ENCODE measurements at regions of chr9 and their contacts with region 1.

Region 1: GRCh38 chr9:102499468-102499867 is 495.7 kb upstream of the CYLC2 start:
- DNase-seq: no peak
- ATAC-seq: no peak
- H3K4me3 ChIP-seq: no peak overlapping the region
- H3K4me3 Mint-ChIP-seq: no peak overlapping the region
- H3K27ac ChIP-seq: no peak overlapping the region
- H3K27ac Mint-ChIP-seq: no peak overlapping the region
- H3K4me1 ChIP-seq: no peaks in the 10 kb centered on the region
- H3K4me1 Mint-ChIP-seq: no peaks in the 10 kb centered on the region
- H3K27me3 ChIP-seq: no peaks in the 10 kb centered on the region
- H3K27me3 Mint-ChIP-seq: no peaks in the 10 kb centered on the region
- CTCF ChIP-seq: no peak

Region 2: DNA sequence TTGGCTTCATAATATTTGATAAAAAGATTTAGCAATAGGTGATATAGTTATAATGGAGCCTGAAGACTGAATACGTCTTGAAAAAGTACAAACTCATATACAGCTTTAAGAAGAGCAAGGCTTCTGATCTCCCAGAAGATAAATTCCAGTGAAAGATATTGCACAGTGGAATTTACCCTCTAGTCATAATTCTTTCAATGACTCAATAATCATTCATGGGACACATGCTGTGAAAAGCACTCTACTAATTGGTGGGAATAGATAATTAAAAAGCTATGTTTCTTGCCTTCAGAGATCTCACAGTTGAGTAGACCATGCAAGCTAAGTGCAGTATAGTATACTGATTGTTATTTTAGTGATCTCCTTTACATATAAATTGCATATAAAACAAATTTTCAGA is 42.9 kb before region 1 on chr9:
- CTCF ChIA-PET with region 1: no interaction called
- POLR2A ChIA-PET with region 1: no interaction called
- intact Hi-C with region 1: loop called in 1 of 2 experiments (anchors 1 kb)
- DNase-seq: no peak
- ATAC-seq: no peak
- H3K4me3 ChIP-seq: no peak overlapping the region
- H3K4me3 Mint-ChIP-seq: no peak overlapping the region
- H3K27ac ChIP-seq: no peak overlapping the region
- H3K27ac Mint-ChIP-seq: no peak overlapping the region
- H3K4me1 ChIP-seq: no peaks in the 10 kb centered on the region
- H3K4me1 Mint-ChIP-seq: no peaks in the 10 kb centered on the region
- H3K27me3 ChIP-seq: no peaks in the 10 kb centered on the region
- H3K27me3 Mint-ChIP-seq: no peaks in the 10 kb centered on the region
- CTCF ChIP-seq: no peak